ENCODE measurements at regions of chr3 and their contacts with region 1.

Region 1: GRCh38 chr3:71859123-71859519 is 74.2 kb upstream of the PROK2 start:
- DNase-seq: peak in 4 of 7 donors; percentile 27 to 47 (median 36)
- H3K4me3 ChIP-seq: no peak overlapping the region
- H3K27ac ChIP-seq: peak overlapping the region in 1 of 5 donors; percentile 14
- H3K4me1 ChIP-seq: no peaks in the 10 kb centered on the region
- H3K27me3 ChIP-seq: peaks cover 12% of the 10 kb centered on the region
- CTCF ChIP-seq: peak in 5 of 6 experiments; percentile 47 to 60 (median 50)
- POLR2A ChIP-seq: no peak

Region 2: DNA sequence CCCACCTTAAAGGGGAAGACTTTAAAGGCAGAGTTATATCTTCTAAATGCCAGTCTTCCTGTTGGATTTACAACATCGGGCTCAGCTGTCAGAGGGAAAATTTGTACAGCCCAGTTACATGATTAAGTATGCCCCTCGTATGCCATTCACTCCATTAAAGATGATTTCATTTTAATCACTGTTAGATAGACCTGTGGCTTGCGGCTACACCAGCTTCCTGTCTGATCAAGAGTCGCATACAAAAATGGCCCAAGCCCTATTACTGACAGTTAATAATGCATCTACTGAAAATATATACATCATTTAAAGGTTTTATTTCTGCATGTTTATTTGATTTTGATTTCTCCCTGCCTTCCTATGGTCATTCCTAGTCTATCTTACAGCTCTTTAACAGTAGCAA is 141.0 kb before region 1 on chr3:
- intact Hi-C with region 1: loop called (anchors 5 to 10 kb)
- DNase-seq: no peak
- H3K4me3 ChIP-seq: no peak overlapping the region
- H3K27ac ChIP-seq: no peak overlapping the region
- H3K4me1 ChIP-seq: no peaks in the 10 kb centered on the region
- H3K27me3 ChIP-seq: no peaks in the 10 kb centered on the region
- CTCF ChIP-seq: no peak
- POLR2A ChIP-seq: no peak

Region 3: DNA sequence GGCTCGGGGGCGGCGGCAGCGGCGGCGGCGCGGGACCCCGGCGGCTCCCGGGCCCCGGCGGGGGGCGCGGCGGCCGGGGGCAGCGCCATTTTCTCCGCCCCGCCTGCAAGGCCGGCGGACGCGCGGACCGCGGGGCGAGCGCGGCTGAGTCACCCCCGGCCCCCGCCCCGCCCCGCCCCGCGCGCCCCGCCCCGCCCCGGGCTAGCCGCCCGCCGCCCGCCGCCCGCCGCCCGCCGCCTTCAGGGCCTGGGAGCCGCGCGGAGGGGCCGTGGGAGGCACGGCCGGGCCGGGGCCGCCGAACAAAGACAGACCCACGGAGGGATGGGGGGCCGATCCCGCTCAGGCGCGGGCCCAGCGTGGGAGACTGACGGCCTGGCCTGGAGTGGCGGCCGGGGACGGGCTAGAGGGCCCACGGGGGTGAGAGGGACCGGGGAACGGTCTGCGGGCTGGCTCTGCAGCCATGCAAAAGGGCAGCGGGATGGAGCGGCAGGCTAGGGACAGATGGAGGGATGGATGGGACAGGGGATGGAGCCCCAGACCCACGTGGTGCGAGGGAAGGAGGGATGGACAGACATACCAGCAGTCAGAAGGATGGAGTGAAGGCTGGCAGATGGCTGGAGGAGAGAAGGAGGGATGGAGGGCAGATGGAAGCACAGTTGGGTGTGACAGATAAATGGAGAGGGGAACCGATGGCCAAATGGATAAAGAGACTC is 133.7 kb before region 1 on chr3 and contains the start of gene EIF4E3:
- intact Hi-C with region 1: loop called in 1 of 2 experiments (anchors 10 kb)
- DNase-seq: peak in 5 of 7 donors; percentile 22 to 33 (median 29)
- H3K4me3 ChIP-seq: peak within 1 kb of the TSS; percentile 28 to 99 (median 48)
- H3K27ac ChIP-seq: peak within 1 kb of the TSS in 3 of 5 donors; percentile 26 to 77 (median 39)
- H3K4me1 ChIP-seq: peaks cover 6 to 7% of the 10 kb centered on the region in 2 donors
- H3K27me3 ChIP-seq: no peaks in the 10 kb centered on the region
- CTCF ChIP-seq: no peak
- POLR2A ChIP-seq: no peak
- total RNA-seq, gene EIF4E3: 2.3 to 16.1 (median 11.9) TPM

Region 4: GRCh38 chr3:71931922-71932321 is 72.8 kb after region 1 on chr3:
- intact Hi-C with region 1: no loop called
- DNase-seq: no peak
- H3K4me3 ChIP-seq: no peak overlapping the region
- H3K27ac ChIP-seq: no peak overlapping the region
- H3K4me1 ChIP-seq: no peaks in the 10 kb centered on the region
- H3K27me3 ChIP-seq: no peaks in the 10 kb centered on the region
- CTCF ChIP-seq: no peak
- POLR2A ChIP-seq: no peak